Breast epithelium (tissue), 4 donors: ENCODE measurements at regions of chr6 and their contacts with region 1.

Region 1: GRCh38 chr6:83781506-83781905 is 71.7 kb upstream of the RIPPLY2 start:
- DNase-seq: no peak
- H3K4me3 ChIP-seq: no peak overlapping the region
- H3K27ac ChIP-seq: no peak overlapping the region
- H3K4me1 ChIP-seq: no peaks in the 10 kb centered on the region
- H3K27me3 ChIP-seq: no peaks in the 10 kb centered on the region
- CTCF ChIP-seq: no peak
- POLR2A ChIP-seq: no peak

Region 2: GRCh38 chr6:83741089-83741488 is 40.4 kb before region 1 on chr6:
- intact Hi-C with region 1: loop called (anchors 2 kb)
- DNase-seq: no peak
- H3K4me3 ChIP-seq: no peak overlapping the region
- H3K27ac ChIP-seq: no peak overlapping the region
- H3K4me1 ChIP-seq: no peaks in the 10 kb centered on the region
- H3K27me3 ChIP-seq: no peaks in the 10 kb centered on the region
- CTCF ChIP-seq: no peak
- POLR2A ChIP-seq: no peak

Region 3: DNA sequence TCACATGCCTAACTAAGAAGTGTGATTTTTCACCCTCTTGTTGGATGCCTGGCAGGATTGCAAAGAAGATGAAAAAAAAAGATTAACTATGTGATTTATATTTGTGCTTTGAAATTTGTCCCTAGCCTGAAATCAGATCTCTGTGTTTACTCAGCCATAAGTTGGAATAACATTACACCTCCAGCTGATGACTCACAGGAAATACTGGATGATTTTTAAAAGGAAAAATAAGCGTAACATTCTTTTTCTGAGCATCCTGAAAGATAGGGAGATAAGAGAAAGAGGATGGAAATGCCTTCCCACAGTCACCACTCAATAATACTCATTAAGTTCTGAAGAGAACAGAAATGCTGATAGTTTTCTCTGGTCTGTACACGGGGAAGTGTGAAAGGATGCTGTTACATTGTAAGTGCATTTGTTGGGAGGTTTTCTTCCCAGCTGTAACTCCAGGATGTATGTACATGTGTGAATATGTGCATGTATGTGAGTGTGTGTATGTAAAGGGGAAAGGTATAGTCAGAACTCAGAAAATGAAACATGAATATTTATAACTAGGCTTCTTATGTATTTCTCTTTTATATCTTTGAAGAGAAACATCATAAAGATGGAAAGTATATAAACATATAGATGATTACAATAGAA is 34.2 kb after region 1 on chr6:
- intact Hi-C with region 1: no loop called
- DNase-seq: no peak
- H3K4me3 ChIP-seq: no peak overlapping the region
- H3K27ac ChIP-seq: no peak overlapping the region
- H3K4me1 ChIP-seq: no peaks in the 10 kb centered on the region
- H3K27me3 ChIP-seq: no peaks in the 10 kb centered on the region
- CTCF ChIP-seq: no peak
- POLR2A ChIP-seq: no peak